Breast epithelium (tissue), 4 donors: ENCODE measurements at regions of chr12 and their contacts with region 1.

Region 1: DNA sequence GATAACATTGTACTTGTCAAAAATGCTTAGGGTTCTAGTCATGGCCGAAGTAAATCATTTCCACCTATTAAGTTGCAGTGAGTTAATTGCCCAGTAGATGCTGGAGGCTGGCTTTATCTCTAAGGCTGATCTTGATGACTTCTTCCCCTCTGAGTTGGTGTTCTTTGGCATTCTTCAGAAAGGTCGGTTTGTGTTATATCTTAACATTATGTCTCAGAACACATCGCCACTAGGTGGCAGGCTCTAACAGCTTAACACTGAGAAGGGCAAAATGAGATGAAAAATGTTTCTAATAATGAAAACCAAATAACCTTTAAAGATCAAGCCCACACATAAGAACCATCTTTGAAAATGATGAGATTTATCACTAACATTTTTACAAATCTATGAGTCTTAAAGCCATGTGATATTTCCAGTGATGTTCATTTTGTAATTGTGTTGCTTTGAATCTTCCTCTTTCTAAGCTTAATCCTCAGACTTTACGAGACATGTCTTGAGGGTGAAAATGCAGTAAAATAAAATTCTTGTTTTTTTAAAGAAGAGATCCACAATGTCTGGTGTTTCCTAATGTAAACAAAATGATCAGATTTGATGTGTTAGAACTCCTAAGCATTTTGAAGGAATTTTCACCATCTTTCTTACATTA is 28.6 kb downstream of the SUDS3 start:
- DNase-seq: no peak
- H3K4me3 ChIP-seq: no peak overlapping the region
- H3K27ac ChIP-seq: no peak overlapping the region
- H3K4me1 ChIP-seq: no peaks in the 10 kb centered on the region
- H3K27me3 ChIP-seq: no peaks in the 10 kb centered on the region
- CTCF ChIP-seq: peak; percentile 47 to 68 (median 55)
- POLR2A ChIP-seq: no peak

Region 2: DNA sequence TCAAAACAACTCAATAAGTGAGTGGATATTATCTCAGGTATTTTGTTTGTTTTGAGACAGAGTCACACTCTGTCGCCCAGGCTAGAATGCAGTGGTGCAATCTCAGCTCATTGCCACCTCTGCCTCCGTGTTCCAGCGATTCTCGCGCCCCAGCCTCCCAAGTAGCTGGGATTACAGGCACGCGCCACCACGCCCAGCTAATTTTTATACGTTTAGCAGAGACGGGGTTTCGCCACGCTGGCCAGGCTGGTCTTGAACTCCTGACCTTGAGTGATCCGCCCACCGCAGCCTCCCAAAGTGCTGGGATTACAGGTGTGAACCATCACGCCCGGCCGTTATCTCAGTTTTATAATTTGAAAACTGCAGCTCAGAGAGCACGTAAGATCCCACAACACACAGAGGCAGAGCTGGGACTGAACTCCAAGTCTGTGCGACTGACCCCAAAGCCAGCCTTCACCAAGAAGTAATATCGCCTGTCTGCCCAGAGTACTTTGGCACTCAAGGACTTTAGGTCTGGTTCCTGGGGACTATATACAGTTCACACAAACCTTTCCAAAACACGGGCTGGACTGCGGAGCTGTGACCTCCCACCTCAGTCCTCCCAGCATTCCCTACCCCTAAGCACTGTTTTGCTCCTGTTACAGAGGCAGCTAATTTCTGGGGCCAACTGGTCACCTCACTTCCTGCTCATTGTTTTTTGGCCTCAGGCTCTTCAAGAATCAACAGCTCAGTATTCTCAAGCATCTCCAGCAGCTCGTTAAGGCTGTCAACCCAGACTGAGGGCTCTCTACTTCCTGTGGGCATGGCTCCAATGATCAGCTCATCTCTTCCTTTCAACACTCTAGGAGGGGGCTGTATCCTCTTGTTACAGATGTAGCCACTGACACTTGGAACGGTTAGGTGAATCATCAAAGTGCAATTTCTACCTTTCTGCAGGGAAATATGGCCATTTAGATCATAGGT is 1328.3 kb before region 1 on chr12:
- intact Hi-C with region 1: loop called (anchors 5 kb)
- DNase-seq: no peak
- H3K4me3 ChIP-seq: no peak overlapping the region
- H3K27ac ChIP-seq: peak overlapping the region; percentile 66 to 67
- H3K4me1 ChIP-seq: no peaks in the 10 kb centered on the region
- H3K27me3 ChIP-seq: no peaks in the 10 kb centered on the region
- CTCF ChIP-seq: no peak
- POLR2A ChIP-seq: no peak

Region 3: GRCh38 chr12:117571321-117571720 is 833.7 kb before region 1 on chr12:
- intact Hi-C with region 1: no loop called
- DNase-seq: no peak
- H3K4me3 ChIP-seq: no peak overlapping the region
- H3K27ac ChIP-seq: no peak overlapping the region
- H3K4me1 ChIP-seq: no peaks in the 10 kb centered on the region
- H3K27me3 ChIP-seq: no peaks in the 10 kb centered on the region
- CTCF ChIP-seq: no peak
- POLR2A ChIP-seq: no peak

Region 4: DNA sequence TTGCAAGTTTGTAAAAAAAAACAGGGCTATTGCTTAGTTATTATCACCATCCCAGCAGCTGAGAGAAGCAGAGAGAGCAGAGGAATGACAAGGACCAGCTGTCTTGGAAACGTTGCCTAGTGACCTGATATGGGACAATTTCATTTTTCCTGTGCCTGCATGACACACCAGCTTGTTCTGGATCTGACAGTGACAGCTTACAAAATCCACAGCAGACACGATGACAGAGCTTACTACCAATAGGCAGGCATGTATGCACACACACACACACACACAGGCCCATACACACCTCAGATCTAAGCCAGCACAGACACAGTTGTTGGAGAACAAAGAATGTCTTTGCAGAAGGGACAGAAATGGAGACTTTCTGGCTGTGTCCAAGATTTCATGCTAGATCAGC is 799.1 kb after region 1 on chr12:
- intact Hi-C with region 1: no loop called
- DNase-seq: no peak
- H3K4me3 ChIP-seq: no peak overlapping the region
- H3K27ac ChIP-seq: no peak overlapping the region
- H3K4me1 ChIP-seq: no peaks in the 10 kb centered on the region
- H3K27me3 ChIP-seq: no peaks in the 10 kb centered on the region
- CTCF ChIP-seq: no peak
- POLR2A ChIP-seq: no peak

Region 5: GRCh38 chr12:119486599-119487154 is 1081.7 kb after region 1 on chr12:
- intact Hi-C with region 1: no loop called
- DNase-seq: no peak
- H3K4me3 ChIP-seq: no peak overlapping the region
- H3K27ac ChIP-seq: no peak overlapping the region
- H3K4me1 ChIP-seq: no peaks in the 10 kb centered on the region
- H3K27me3 ChIP-seq: peaks cover 0 to 5% of the 10 kb centered on the region in 2 donors
- CTCF ChIP-seq: no peak
- POLR2A ChIP-seq: no peak